ENCODE measurements at regions of chr9 and their contacts with region 1.

Region 1: DNA sequence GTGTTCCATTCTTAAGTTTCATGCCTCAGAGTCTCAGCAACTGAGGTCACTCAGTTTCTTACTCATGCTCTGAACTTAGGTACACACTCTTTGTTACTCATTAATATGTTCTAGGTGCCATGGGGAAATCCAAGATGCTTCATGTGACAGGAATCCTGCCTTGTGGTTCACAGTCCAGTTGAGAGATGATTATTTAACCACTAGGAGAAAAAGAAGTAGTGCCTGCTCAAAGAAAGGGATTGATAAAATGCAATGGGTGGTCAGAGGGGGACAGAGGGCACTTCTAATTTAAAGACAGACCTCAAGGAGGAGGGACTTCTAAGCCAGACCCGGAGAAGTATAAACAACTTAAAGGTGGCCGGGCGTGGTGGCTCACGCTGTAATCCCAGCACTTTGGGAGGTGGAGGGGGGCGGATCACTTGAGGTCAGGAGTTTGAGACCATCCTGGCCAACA is 69.0 kb downstream of the UGCG start:
- DNase-seq: peak; percentile 54
- H3K4me3 Mint-ChIP-seq: peak overlapping the region; percentile 31
- H3K27ac Mint-ChIP-seq: peak overlapping the region; percentile 95
- H3K4me1 Mint-ChIP-seq: peaks cover 44% of the 10 kb centered on the region
- H3K27me3 Mint-ChIP-seq: no peaks in the 10 kb centered on the region
- CTCF ChIP-seq: no peak

Region 2: GRCh38 chr9:111994831-111995458 is 29.4 kb after region 1 on chr9:
- CTCF ChIA-PET with region 1: no interaction called
- intact Hi-C with region 1: loop called (anchors 1 kb)
- DNase-seq: peak; percentile 26
- H3K4me3 Mint-ChIP-seq: no peak overlapping the region
- H3K27ac Mint-ChIP-seq: peak overlapping the region; percentile 94
- H3K4me1 Mint-ChIP-seq: peaks cover 20% of the 10 kb centered on the region
- H3K27me3 Mint-ChIP-seq: no peaks in the 10 kb centered on the region
- CTCF ChIP-seq: no peak